HEK293T (cell line): ENCODE measurements at regions of chr6 and their contacts with region 1.

Region 1: GRCh38 chr6:32118782-32119628 is 9.0 kb downstream of the ATF6B start:
- DNase-seq: peak; percentile 87

Region 2: GRCh38 chr6:32108094-32108627 is 10.8 kb before region 1 on chr6:
- CTCF ChIA-PET with region 1: interaction called, 14 read pairs
- POLR2A ChIA-PET with region 1: no interaction called
- DNase-seq: peak; percentile 31

Region 3: DNA sequence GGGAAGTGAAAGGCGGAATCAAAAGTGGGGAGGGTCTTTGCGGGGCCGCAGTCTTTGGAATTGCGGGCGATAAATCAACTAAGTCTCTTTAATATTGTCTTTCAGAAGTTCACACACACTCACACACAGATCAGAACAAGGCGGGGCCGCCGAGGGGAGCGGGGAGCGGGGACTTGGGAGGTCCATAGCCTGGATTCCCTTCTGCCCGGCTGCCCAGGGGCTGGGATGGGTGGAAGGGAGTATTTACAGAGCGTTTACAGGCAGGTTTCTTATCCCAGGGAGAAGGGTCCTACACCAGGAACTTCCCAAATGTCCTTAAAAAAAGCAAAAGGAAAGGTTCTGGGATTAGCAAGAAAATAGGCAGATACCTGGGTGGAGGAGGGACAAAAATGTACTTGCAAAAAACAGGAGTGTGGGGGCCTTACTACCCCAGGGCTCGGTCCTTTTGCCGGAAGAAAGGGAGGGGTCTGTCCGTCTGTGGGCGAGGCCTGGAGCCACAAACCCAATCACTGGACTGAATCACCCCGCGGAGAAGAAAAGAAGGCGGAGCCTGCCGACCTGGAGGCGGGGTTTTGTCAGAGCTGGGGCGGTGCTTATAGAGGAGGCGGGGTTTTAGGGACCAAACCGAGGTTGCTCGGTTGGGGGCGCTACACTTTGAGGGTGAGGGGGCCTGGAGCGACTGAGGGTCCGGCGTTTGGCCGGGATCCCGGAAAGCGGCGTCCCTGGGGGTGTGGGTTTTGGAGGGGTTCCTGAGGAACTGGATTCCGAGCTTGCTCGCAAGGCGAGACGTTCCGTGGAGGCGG is 29.5 kb after region 1 on chr6:
- CTCF ChIA-PET with region 1: interaction called, 13 read pairs
- POLR2A ChIA-PET with region 1: interaction called, 7 read pairs
- DNase-seq: peak; percentile 48